ENCODE measurements at regions of chr1 and their contacts with region 1.

Region 1: DNA sequence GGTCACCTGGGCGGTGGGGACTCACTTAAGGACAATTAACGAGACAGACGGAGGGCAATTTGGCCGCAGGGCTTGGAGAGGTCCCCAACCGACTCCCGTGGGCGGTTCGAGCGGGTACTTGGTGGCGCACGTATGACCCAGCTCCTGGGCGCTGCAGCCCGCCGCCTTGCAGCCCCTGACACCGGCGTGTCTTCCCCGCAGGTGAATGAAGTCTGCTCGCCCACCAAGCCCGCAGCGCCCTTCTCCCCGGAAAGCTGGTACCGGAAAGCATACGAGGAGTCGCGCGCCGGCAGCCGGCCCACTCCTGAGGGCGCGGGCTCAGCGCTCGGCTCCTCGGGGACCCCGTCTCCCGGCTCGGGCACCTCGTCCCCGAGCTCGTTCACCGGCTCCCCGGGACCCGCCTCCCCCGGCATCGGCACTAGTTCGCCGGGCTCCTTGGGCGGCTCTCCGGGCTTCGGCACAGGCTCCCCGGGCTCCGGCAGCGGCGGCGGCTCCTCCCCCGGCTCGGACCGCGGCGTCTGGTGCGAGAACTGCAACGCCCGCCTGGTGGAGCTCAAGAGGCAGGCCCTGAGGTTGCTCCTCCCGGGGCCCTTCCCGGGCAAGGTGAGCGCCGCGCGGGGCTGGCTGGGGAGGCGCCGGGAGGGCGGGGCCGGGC is 1.4 kb downstream of the KIF26B start:
- DNase-seq: peak; percentile 93
- H3K4me3 Mint-ChIP-seq: peak overlapping the region; percentile 79
- H3K27ac Mint-ChIP-seq: no peak overlapping the region
- H3K4me1 Mint-ChIP-seq: peaks cover 17% of the 10 kb centered on the region
- H3K27me3 Mint-ChIP-seq: peaks cover 38% of the 10 kb centered on the region
- CTCF ChIP-seq: peak; percentile 99

Region 2: DNA sequence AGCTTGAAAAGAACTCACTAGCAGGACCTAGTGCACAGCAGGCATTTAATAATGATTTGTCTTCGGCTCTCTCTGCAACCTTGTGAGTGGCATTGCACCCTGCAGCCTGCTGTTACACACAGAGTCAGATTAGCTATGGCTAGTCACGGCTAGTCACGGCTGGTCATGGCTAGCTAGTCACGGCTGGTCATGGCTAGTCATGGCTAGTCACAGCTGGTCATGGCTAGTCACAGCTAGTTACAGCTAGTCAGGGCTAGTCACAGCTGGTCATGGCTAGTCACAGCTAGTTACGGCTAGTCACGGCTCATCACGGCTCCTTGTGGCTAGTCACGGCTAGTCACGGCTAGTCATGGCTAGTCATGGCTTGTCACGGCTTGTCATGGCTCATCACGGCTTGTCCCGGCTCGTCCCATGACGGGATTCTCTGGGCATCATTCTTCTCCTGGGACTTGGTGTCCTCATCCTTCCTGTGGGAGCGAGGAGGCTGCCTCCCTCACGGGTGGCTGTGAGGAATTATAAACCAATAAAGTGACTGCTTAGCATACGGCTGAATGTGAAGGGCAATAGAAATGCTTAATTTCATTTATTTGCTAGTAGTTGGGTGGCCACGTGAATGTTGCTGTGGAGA is 13.9 kb before region 1 on chr1:
- CTCF ChIA-PET with region 1: interaction called, 46 read pairs
- POLR2A ChIA-PET with region 1: interaction called, 8 read pairs
- intact Hi-C with region 1: no loop called
- DNase-seq: no peak
- H3K4me3 Mint-ChIP-seq: no peak overlapping the region
- H3K27ac Mint-ChIP-seq: no peak overlapping the region
- H3K4me1 Mint-ChIP-seq: no peaks in the 10 kb centered on the region
- H3K27me3 Mint-ChIP-seq: peaks cover 53% of the 10 kb centered on the region
- CTCF ChIP-seq: no peak

Region 3: GRCh38 chr1:245380790-245381535 is 224.8 kb after region 1 on chr1:
- CTCF ChIA-PET with region 1: interaction called, 6 read pairs
- POLR2A ChIA-PET with region 1: no interaction called
- intact Hi-C with region 1: loop called (anchors 5 kb)
- DNase-seq: no peak
- H3K4me3 Mint-ChIP-seq: no peak overlapping the region
- H3K27ac Mint-ChIP-seq: no peak overlapping the region
- H3K4me1 Mint-ChIP-seq: no peaks in the 10 kb centered on the region
- H3K27me3 Mint-ChIP-seq: peaks cover 36% of the 10 kb centered on the region
- CTCF ChIP-seq: no peak

Region 4: DNA sequence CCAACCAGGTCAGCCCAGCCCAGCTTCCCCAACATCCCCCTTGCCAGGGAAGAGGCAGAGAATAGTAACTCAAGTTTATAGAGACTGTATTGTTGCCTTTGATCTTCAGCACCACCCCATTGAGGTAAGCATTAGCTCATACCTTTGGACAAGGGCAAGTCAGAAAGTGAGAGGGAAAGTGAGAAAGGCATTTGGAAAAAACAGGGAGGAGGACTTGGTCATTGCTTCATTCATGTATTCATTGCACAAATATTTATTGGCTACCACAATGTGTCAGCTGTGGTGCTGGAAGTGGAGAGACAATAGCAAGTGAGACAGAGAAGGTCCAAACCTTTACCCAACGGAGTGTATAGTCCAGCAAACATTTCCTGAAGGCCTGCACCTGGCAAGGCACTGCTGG is 559.8 kb after region 1 on chr1:
- CTCF ChIA-PET with region 1: interaction called, 11 read pairs
- POLR2A ChIA-PET with region 1: no interaction called
- intact Hi-C with region 1: loop called (anchors 10 kb)
- DNase-seq: peak; percentile 95
- H3K4me3 Mint-ChIP-seq: no peak overlapping the region
- H3K27ac Mint-ChIP-seq: peak overlapping the region; percentile 77
- H3K4me1 Mint-ChIP-seq: peaks cover 30% of the 10 kb centered on the region
- H3K27me3 Mint-ChIP-seq: no peaks in the 10 kb centered on the region
- CTCF ChIP-seq: no peak

Region 5: DNA sequence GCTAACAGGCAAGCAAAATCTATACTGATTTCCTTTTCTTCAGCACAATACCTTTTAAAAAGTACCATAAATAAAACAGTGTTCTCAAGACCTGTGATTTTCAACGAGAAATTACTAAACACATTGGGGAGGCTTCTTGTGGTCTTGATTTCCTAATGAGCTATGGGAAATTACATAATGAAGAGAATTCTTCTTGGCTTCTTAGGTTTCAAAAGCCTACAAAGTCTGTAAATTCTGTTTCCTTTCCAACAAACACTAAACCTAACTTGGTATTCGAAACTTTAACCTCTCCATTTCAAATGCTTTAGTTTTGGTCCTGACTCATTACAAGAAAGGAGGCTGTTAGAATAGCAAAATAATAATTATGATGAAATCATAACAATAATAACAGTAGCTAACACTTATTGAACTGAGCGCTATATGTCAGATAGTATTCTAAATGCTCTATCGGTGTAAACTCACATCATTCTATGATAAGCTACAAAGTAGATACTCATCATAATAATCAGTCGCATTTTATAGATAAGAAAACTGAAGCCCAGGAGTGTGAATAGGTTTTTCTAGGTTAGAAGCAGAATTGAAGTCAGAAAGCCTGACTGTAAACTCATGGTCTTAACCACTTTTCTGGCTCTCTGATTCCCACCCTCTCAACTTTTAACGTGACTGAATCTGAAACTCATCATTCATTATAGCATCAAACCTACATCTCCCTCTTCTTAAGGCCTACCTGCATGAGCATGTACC is 864.2 kb after region 1 on chr1:
- CTCF ChIA-PET with region 1: interaction called, 11 read pairs
- POLR2A ChIA-PET with region 1: no interaction called
- intact Hi-C with region 1: no loop called
- DNase-seq: no peak
- H3K4me3 Mint-ChIP-seq: no peak overlapping the region
- H3K27ac Mint-ChIP-seq: no peak overlapping the region
- H3K4me1 Mint-ChIP-seq: no peaks in the 10 kb centered on the region
- H3K27me3 Mint-ChIP-seq: no peaks in the 10 kb centered on the region
- CTCF ChIP-seq: no peak

Region 6: GRCh38 chr1:246450611-246451251 is 1294.5 kb after region 1 on chr1:
- CTCF ChIA-PET with region 1: interaction called, 44 read pairs
- POLR2A ChIA-PET with region 1: no interaction called
- intact Hi-C with region 1: loop called (anchors 1 kb)
- DNase-seq: peak; percentile 61
- H3K4me3 Mint-ChIP-seq: no peak overlapping the region
- H3K27ac Mint-ChIP-seq: no peak overlapping the region
- H3K4me1 Mint-ChIP-seq: no peaks in the 10 kb centered on the region
- H3K27me3 Mint-ChIP-seq: no peaks in the 10 kb centered on the region
- CTCF ChIP-seq: peak; percentile 98

Region 7: GRCh38 chr1:246699095-246699735 is 1543.0 kb after region 1 on chr1:
- CTCF ChIA-PET with region 1: no interaction called
- POLR2A ChIA-PET with region 1: no interaction called
- intact Hi-C with region 1: loop called (anchors 2 kb)
- DNase-seq: peak; percentile 98
- H3K4me3 Mint-ChIP-seq: peak overlapping the region; percentile 69
- H3K27ac Mint-ChIP-seq: peak overlapping the region; percentile 76
- H3K4me1 Mint-ChIP-seq: peaks cover 14% of the 10 kb centered on the region
- H3K27me3 Mint-ChIP-seq: no peaks in the 10 kb centered on the region
- CTCF ChIP-seq: peak; percentile 96

Measured in MCF 10A (cell line).